PC-9 (cell line): ENCODE measurements at regions of chr10 and their contacts with region 1.

Region 1: GRCh38 chr10:119207367-119207668 is at the start of gene GRK5:
- DNase-seq: peak; percentile 74 to 90
- H3K4me3 ChIP-seq: peak within 1 kb of the TSS; percentile 86
- H3K27ac ChIP-seq: peak within 1 kb of the TSS; percentile 32; the same call in 1 of the 2 replicates
- H3K4me1 ChIP-seq: peaks cover 32% of the 10 kb centered on the region
- H3K27me3 ChIP-seq: no peaks in the 10 kb centered on the region
- CTCF ChIP-seq: no peak
- total RNA-seq, gene GRK5: 4.8 and 5.3 TPM in 2 replicates

Region 2: DNA sequence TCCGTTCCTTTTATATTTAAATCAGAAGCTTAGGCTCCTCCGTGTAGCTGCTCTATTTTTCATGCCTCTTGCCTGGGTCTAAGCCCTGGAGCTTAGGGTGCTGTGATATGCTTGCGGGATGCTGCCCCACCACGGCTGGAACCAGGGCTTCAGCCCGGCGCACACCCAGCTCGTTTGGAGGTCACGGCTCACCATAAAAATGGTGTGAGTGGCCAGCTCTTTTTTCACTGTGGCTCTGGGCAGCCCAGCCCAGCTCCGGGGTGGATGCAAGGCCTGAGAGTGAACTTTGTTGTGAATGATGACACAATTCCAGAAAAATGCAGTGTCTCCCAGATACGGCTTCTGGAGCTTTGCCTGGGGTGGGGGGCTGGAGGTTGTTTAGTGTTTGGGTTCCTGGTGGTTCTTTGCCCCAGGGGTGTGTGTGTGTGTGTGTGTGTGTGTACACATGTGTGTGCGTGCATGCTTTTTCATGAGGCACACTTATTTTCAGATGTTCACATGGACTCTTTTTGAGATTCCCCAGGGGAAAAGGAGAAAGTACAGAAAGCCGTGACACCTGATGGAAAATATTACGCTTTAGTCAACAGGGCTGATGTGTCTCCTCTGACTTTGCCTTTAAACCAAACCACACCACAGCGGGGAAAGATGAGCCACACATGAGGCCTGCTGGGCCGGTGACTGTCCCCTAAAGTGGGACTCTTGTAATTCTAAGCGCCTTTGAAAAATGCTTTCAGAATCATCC is 46.3 kb after region 1 on chr10:
- CTCF ChIA-PET with region 1: interaction called, 14 read pairs
- POLR2A ChIA-PET with region 1: interaction called, 11 read pairs
- intact Hi-C with region 1: loop called (anchors 5 kb)
- DNase-seq: peak; percentile 73 to 80
- H3K4me3 ChIP-seq: peak overlapping the region; percentile 24; the same call in 1 of the 2 replicates
- H3K27ac ChIP-seq: peak overlapping the region; percentile 97
- H3K4me1 ChIP-seq: peaks cover 40% of the 10 kb centered on the region
- H3K27me3 ChIP-seq: no peaks in the 10 kb centered on the region
- CTCF ChIP-seq: no peak

Region 3: GRCh38 chr10:119290291-119291048 is 83.2 kb after region 1 on chr10:
- CTCF ChIA-PET with region 1: no interaction called
- POLR2A ChIA-PET with region 1: no interaction called
- intact Hi-C with region 1: loop called (anchors 2 kb)
- DNase-seq: peak; percentile 49 to 89
- H3K4me3 ChIP-seq: no peak overlapping the region; the same call in 1 of the 2 replicates
- H3K27ac ChIP-seq: peak overlapping the region; percentile 73
- H3K4me1 ChIP-seq: peaks cover 28% of the 10 kb centered on the region
- H3K27me3 ChIP-seq: no peaks in the 10 kb centered on the region
- CTCF ChIP-seq: peak; percentile 47; the same call in 1 of the 2 replicates

Region 4: GRCh38 chr10:119315128-119316001 is 108.0 kb after region 1 on chr10:
- CTCF ChIA-PET with region 1: no interaction called
- POLR2A ChIA-PET with region 1: interaction called, 26 read pairs
- intact Hi-C with region 1: no loop called
- DNase-seq: peak; percentile 68 to 86
- H3K4me3 ChIP-seq: 0 out of 2 replicates have a peak overlapping the region, but pooled peaks have one; percentile 7
- H3K27ac ChIP-seq: peak overlapping the region; percentile 96
- H3K4me1 ChIP-seq: peaks cover 46% of the 10 kb centered on the region
- H3K27me3 ChIP-seq: no peaks in the 10 kb centered on the region
- CTCF ChIP-seq: no peak

Region 5: GRCh38 chr10:119445311-119445934 is 238.1 kb after region 1 on chr10:
- CTCF ChIA-PET with region 1: interaction called, 5 read pairs
- POLR2A ChIA-PET with region 1: no interaction called
- intact Hi-C with region 1: loop called (anchors 2 kb)
- DNase-seq: peak; percentile 58 to 72
- H3K4me3 ChIP-seq: no peak overlapping the region
- H3K27ac ChIP-seq: no peak overlapping the region
- H3K4me1 ChIP-seq: peaks cover 15% of the 10 kb centered on the region
- H3K27me3 ChIP-seq: no peaks in the 10 kb centered on the region
- CTCF ChIP-seq: peak; percentile 86

Region 6: DNA sequence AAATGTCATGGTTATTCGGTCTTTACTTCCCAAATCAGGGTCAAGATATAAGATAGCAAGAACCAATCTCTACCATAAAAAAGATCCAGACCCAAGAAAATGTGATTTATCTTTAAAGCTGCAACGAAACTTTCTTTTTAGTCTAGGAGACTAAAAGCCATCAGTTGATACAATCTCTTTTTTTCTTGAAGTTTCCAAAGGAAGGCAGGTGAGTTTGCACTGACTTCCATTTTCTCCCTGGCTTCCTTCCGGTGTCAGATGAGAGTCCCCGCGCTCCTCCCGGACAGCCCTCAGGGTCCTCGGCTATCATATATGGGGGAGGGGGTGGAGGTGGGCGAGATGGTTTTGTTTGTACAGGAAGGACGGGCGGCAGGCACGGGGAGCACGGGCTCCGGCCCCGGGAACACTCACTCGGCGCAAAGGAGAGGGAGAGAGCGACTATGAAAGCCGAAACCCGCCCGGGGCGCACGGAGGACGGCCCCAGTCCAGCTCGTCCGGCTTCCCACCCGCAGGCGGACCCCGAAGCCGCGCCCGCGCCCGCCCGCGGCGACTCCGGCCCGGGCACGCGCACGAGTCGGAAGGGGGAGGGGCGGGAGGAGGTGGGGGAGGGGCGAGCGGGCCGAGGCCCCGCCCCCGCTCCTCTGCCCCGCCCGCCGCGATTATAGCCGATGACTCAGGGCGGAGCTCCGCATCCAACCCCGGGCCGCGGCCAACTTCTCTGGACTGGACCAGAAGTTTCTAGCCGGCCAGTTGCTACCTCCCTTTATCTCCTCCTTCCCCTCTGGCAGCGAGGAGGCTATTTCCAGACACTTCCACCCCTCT is 443.6 kb after region 1 on chr10 and contains the start of gene BAG3:
- CTCF ChIA-PET with region 1: no interaction called
- POLR2A ChIA-PET with region 1: no interaction called
- intact Hi-C with region 1: loop called (anchors 10 kb)
- DNase-seq: peak; percentile 73 to 78
- H3K4me3 ChIP-seq: peak within 1 kb of the TSS; percentile 87
- H3K27ac ChIP-seq: peak within 1 kb of the TSS; percentile 75
- H3K4me1 ChIP-seq: peaks cover 32% of the 10 kb centered on the region
- H3K27me3 ChIP-seq: no peaks in the 10 kb centered on the region
- CTCF ChIP-seq: no peak
- total RNA-seq, gene BAG3: 62.7 and 75.7 TPM in 2 replicates